ENCODE measurements at regions of chr17 and their contacts with region 1.

Region 1: GRCh38 chr17:17972126-17972951 is at the starts of genes DRC3 and TOM1L2:
- DNase-seq: peak; percentile 100
- ATAC-seq: peak; percentile 96
- total RNA-seq, gene DRC3: 1.5 TPM
- total RNA-seq, gene TOM1L2: 287 TPM

Region 2: DNA sequence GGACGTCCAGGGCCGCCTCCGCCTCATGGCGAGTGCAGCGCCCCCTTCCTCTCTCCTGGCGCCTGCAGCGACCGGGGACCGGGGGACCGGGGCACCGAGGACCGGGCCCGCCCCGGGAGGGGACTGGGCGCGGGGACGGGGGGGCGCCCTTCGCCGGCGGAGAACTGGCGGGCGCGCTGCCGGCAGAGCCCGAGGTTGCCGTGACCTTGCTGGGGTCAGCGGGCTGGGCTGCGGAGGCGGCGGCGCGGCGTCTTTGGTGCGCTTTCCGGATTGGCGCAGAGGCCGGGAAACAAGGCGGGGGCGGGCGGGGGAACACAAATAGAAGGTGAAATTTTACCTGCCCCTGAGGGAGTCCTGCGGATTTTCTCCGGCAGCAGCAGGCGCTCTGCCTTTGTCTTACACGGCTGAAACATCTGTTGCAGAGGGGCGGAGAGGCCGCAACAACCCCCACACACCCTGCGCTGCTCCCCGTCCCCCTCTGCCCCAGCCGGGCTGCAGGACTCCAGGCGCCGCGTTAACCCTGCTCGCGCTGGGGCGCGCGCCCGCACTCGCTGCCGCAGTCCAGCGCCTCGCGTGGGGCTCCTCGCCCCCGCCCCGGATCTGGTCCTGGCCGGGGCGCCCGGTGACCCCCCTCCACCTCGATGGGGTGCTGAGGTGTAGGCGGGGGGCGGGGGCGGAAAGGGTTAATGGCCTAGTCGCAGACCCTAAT is 189.1 kb before region 1 on chr17:
- intact Hi-C with region 1: no loop called
- DNase-seq: peak; percentile 85
- ATAC-seq: peak; percentile 58

Region 3: DNA sequence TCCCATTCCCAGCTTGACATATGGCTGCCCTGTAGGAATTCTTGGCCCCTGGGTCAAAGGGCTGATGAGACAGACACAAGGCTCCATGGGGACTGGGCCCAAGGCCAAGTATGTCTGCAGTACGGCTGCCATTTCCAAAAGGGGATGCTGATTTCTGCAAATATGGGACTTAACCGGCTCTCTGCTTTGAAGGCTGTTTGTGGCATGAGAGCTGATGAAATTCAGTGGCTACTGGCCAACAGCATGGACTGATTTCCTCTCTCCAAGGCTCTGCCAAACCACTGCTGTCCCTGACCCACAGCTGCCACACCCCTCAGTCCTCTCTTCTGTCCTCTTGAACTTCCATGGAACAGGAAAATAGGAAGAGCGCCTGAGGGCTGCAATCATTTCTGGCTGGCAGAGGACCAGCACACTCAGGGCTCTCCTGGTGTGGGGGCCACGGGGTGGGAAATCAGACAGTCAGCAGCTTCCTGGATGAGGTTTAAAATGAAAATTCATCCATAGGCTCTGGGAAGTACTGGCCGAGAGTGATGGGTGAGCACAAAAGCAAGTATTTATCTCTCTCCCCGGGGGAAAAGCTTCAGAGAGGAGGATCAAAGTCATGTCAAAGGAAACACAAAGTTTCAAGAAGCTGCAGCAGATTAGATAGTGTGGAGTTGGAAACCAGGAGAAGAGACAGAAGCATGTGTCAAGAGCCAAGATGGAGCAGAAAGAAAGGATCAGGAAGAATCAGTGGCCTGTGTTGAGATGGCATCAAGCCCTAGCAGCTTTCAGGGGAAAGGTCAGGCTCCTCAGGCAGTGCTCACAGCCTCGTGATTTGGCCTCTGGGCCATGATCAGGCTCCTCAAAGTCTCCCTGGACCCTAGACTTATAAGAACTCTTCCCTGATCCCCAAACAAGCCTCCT is 71.5 kb before region 1 on chr17:
- intact Hi-C with region 1: no loop called
- DNase-seq: peak; percentile 82
- ATAC-seq: peak; percentile 95

Region 4: DNA sequence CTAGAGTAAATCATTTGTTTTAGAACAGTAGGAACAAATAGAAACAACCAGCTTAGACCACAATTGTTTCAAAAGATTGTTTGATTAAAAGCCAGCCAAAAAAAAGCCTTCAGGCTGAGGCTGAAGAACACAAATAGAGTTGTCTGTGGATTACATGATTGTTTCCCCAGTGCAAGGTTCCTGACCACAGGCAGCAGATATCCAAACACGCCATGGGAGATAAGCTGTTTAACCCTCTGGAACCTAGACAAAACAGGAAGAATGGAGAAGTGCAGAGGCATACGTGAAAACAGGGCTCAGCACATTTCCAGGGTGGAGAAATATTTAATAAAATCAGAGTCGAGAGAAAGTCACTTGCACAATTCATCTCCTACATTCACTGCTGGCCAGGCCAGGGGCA is 45.6 kb after region 1 on chr17:
- intact Hi-C with region 1: no loop called
- DNase-seq: no peak
- ATAC-seq: peak; percentile 39

Region 5: DNA sequence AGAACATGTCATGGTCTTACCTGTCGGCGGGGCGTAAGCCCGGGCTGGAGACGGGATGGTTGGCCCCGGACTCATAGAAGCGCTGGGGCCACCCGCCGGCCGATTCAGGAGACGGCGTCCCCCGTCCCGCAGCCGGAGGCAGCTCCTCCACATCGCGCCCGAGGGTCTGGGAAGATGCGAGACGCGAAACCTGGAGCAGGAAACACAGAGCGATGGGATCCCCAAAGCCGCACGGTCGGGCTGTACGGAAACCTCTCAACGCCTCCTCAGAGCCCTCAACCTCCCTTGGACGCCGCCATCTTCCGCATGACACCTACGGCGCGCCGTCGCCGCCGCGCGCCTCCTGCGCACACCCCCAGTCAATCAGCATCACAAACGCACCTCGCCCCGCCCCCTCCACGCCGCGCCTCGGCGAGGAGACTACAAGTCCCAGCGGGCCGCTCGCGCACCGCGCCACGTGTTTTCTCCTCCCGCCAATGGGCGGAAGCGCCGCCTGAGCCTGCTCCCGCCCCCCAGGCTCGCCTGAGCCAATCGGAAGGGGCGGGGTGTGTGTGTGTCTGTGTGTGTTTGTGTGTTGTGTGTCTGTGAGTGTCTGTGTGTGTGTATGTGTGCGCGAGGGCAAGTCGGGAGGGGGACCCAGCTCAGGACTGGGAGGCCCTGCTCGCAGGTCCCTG is 66.7 kb after region 1 on chr17 and contains the starts of genes ATPAF2 and GID4:
- intact Hi-C with region 1: loop called (anchors 10 kb)
- DNase-seq: peak; percentile 100
- ATAC-seq: peak; percentile 96
- total RNA-seq, gene ATPAF2: 37.0 TPM
- total RNA-seq, gene GID4: 23.5 TPM

Measured in left ventricle myocardium superior (tissue), 1 donor.